AG04450 (cell line): ENCODE measurements at regions of chr1 and their contacts with region 1.

Region 1: DNA sequence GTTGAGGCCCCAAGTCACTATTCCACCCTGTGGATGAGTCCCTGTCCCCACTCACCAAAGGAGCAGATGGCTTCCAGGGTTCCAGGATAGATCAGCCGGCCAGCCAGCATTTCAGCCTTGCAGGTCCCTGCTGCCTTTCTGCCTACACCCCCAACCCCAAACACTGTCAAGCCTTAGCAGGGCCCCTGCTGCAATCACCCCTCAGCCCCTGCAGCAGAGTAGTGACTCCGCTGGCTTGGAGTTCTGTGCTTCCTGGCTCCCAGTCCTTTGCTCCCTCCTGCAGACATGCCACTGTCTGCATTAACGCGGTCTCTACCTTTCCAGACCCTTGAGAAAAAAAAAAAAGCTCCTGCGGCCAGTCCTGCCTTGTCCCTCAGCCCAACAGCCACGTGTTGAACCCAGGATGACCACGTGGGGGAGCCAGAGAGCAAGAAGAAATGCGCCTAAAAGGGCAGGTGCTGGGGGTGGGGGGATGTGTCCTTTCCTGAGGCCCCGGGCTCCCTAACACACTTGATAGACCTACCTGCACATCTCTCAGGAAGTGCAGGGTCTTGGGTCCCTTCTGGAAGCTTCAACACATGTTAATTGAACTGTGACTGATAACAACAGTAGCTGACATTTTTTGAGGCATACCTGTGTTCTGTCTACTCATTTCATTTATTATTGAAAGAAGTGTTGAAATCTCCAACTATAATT is 37.4 kb downstream of the RASSF5 start:
- DNase-seq: no peak
- H3K4me3 ChIP-seq: no peak overlapping the region
- H3K27ac ChIP-seq: no peak overlapping the region
- H3K27me3 ChIP-seq: peaks cover 13% of the 10 kb centered on the region
- CTCF ChIP-seq: peak; percentile 88

Region 2: DNA sequence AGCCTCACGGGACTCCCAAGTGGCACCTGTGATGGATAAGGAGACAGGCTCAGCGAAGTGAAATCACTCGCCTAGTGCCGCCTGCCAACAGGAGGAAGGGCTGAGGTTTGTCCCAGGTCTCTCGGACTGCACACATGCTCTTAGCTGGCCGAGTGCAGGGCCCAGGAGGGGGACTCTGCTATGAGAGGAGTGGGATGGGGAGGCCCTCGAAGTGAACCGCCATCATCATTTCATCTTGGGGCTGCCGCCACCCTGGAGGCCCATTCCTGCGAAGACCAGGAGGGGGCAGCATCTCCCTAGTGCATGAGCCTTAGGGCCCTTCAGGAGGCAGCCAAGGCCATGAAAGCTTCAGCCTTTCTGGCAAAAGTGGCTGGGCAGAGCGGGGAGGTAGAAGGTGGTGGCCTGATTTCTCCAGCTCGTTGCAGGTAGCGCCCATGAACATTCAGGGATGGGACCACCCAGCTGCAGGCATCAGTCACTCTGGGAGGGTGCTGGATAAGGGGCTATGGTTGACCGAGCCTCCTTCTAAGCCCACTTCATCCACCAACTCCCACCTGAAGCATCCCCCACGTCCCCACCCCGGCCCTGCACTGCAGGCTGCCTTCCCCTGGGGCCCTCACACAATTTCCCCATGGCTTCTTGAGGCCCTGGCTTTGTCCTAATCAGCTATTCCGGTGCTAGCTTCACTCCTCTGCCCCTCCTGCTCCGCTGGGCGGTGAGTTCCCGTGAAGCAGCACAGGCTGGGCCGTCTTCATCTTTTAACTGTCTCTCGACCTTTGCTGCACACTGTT is 54.5 kb before region 1 on chr1:
- CTCF ChIA-PET with region 1: interaction called, 38 read pairs
- POLR2A ChIA-PET with region 1: no interaction called
- DNase-seq: no peak
- H3K4me3 ChIP-seq: no peak overlapping the region
- H3K27ac ChIP-seq: no peak overlapping the region
- H3K27me3 ChIP-seq: no peaks in the 10 kb centered on the region
- CTCF ChIP-seq: peak; percentile 99

Region 3: GRCh38 chr1:206524739-206525369 is 19.9 kb before region 1 on chr1:
- CTCF ChIA-PET with region 1: interaction called, 18 read pairs
- POLR2A ChIA-PET with region 1: interaction called, 5 read pairs
- DNase-seq: no peak
- H3K4me3 ChIP-seq: no peak overlapping the region
- H3K27ac ChIP-seq: no peak overlapping the region
- H3K27me3 ChIP-seq: peaks cover 7% of the 10 kb centered on the region
- CTCF ChIP-seq: no peak

Region 4: GRCh38 chr1:206563367-206564207 is 18.9 kb after region 1 on chr1:
- CTCF ChIA-PET with region 1: interaction called, 27 read pairs
- POLR2A ChIA-PET with region 1: no interaction called
- DNase-seq: no peak
- H3K4me3 ChIP-seq: no peak overlapping the region
- H3K27ac ChIP-seq: no peak overlapping the region
- H3K27me3 ChIP-seq: peaks cover 5% of the 10 kb centered on the region
- CTCF ChIP-seq: no peak

Region 5: GRCh38 chr1:206583707-206584648 is 39.3 kb after region 1 on chr1:
- CTCF ChIA-PET with region 1: interaction called, 79 read pairs
- POLR2A ChIA-PET with region 1: no interaction called
- DNase-seq: peak; percentile 29
- H3K4me3 ChIP-seq: no peak overlapping the region
- H3K27ac ChIP-seq: no peak overlapping the region
- H3K27me3 ChIP-seq: no peaks in the 10 kb centered on the region
- CTCF ChIP-seq: peak; percentile 96

Region 6: DNA sequence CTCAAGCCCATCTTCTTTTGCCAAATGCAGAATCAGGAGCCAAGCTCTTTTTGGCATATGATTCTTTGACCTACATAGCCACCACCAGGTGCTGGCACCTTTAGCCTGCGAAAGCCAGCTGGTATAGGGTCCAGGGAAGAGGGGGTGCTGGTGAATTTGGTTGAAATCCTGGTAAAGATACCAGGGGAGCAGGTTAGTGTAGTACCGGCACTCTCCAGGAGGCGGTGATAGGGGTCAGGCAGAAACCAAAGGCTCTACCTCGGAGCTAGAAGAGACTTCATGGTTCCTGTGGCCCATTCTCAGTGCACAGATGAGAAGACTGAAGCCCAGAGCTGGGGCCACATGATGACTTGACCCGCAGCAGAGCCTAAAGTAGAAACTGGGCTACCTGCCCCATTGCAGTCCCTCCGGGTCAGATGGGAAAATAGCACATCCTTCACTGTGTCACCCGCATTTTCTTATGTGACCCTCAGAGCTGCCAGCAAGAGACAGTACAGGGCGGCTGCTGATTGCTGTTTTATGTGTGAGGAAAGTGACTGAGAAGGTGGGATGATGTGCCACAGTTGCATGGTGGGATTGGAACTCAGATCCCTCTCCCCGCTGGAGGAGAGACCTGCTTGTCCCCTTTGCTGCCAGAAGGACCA is 189.9 kb after region 1 on chr1:
- CTCF ChIA-PET with region 1: no interaction called
- POLR2A ChIA-PET with region 1: no interaction called
- DNase-seq: no peak
- H3K4me3 ChIP-seq: no peak overlapping the region
- H3K27ac ChIP-seq: no peak overlapping the region
- H3K27me3 ChIP-seq: no peaks in the 10 kb centered on the region
- CTCF ChIP-seq: peak; percentile 91

Region 7: DNA sequence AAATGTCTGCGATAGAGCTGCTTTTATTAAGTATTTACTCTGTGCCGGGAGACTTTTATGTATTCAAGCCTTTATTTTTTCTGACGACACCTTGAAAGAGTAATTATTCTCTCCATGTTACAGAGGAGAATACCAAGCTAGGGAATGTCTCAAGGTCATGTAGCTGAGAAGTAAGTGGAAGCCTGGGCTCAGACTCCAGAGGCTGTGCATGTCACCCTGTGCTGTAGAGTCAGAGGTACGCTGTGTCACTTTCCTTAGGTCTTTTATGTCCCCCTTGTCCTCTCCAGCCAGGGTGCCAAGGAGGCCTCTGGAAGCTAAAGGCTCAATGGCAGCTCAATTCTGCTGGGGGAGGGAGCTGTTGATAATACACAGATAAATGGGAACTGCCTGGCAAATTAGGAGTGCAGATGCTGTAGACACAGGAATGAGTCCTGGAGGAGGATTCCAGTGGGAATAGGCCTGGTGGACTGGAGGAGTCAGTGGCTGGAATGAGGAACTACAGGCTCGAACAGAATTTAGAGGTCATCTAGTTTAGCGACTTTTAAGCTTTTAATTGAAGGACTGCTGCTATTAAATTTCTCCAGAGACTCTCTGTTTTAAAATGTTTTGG is 216.6 kb after region 1 on chr1:
- CTCF ChIA-PET with region 1: no interaction called
- POLR2A ChIA-PET with region 1: no interaction called
- DNase-seq: no peak
- H3K4me3 ChIP-seq: no peak overlapping the region
- H3K27ac ChIP-seq: no peak overlapping the region
- H3K27me3 ChIP-seq: no peaks in the 10 kb centered on the region
- CTCF ChIP-seq: peak; percentile 47

Region 8: GRCh38 chr1:206826405-206826804 is 281.7 kb after region 1 on chr1:
- CTCF ChIA-PET with region 1: no interaction called
- POLR2A ChIA-PET with region 1: no interaction called
- DNase-seq: no peak
- H3K4me3 ChIP-seq: no peak overlapping the region
- H3K27ac ChIP-seq: no peak overlapping the region
- H3K27me3 ChIP-seq: no peaks in the 10 kb centered on the region
- CTCF ChIP-seq: no peak

Region 9: DNA sequence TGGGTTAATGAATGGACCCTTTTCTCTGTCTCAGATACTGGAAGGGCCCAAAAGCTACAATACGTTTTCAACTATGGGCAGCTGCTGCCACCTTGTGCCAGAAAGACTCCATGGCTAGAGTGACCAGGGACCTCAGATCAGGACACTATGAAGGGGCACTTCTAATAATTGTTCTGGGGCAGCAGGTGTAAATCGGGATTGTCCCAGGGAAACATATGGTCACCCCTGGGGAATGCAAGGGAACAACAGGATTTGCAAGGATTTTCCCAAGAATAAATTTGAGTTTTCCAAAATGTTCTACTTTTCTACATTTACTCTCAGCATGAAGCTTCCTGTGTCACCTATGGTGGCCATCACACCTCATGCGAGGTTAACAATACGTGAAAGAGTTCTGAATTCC is 437.5 kb after region 1 on chr1:
- CTCF ChIA-PET with region 1: interaction called, 15 read pairs
- POLR2A ChIA-PET with region 1: no interaction called
- DNase-seq: no peak
- H3K4me3 ChIP-seq: no peak overlapping the region
- H3K27ac ChIP-seq: no peak overlapping the region
- H3K27me3 ChIP-seq: peaks cover 42% of the 10 kb centered on the region
- CTCF ChIP-seq: peak; percentile 67